Adrenal gland (tissue), 19 donors: ENCODE measurements at regions of chr5 and their contacts with region 1.

Region 1: DNA sequence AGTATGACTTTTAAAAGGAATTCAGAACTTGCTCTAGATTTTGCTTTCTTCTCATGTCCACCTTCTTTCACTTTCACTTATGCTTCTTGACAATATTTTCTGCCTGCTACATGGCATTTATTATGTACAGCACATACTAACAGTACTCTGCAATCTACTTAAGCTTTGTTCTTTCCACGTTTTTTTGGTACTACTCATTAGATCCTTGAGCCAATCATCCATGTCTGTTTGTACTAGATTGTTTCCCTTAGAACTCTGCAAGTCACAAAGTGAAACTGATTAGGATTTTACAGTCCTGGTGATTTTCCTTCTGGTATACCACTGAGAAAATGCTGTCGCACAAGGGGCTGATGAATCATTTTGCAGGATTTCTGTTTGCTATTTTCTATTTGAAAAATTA is 78.3 kb downstream of the PARP8 start:
- DNase-seq: no peak
- H3K4me3 ChIP-seq: peak overlapping the region in 2 of 4 donors; percentile 8 to 55
- H3K27ac ChIP-seq: peak overlapping the region in 3 of 5 donors; percentile 41 to 64 (median 58)
- H3K4me1 ChIP-seq: peaks cover 0 to 30% of the 10 kb centered on the region in 2 donors
- H3K27me3 ChIP-seq: no peaks in the 10 kb centered on the region
- CTCF ChIP-seq: no peak
- POLR2A ChIP-seq: no peak

Region 2: GRCh38 chr5:50667653-50668595 is 76.9 kb before region 1 on chr5:
- intact Hi-C with region 1: loop called in 1 of 2 experiments (anchors 10 kb)
- DNase-seq: peak; percentile 55 to 72 (median 66)
- H3K4me3 ChIP-seq: peak overlapping the region; percentile 73 to 100 (median 88)
- H3K27ac ChIP-seq: peak overlapping the region; percentile 58 to 93 (median 87)
- H3K4me1 ChIP-seq: peaks cover 0 to 32% of the 10 kb centered on the region in 2 donors
- H3K27me3 ChIP-seq: no peaks in the 10 kb centered on the region
- CTCF ChIP-seq: no peak
- POLR2A ChIP-seq: peak in 1 of 2 donors; percentile 16

Region 3: GRCh38 chr5:50697421-50698138 is 47.2 kb before region 1 on chr5:
- intact Hi-C with region 1: no loop called
- DNase-seq: no peak
- H3K4me3 ChIP-seq: no peak overlapping the region
- H3K27ac ChIP-seq: no peak overlapping the region
- H3K4me1 ChIP-seq: peaks cover 0 to 13% of the 10 kb centered on the region in 2 donors
- H3K27me3 ChIP-seq: no peaks in the 10 kb centered on the region
- CTCF ChIP-seq: no peak
- POLR2A ChIP-seq: no peak

Region 4: DNA sequence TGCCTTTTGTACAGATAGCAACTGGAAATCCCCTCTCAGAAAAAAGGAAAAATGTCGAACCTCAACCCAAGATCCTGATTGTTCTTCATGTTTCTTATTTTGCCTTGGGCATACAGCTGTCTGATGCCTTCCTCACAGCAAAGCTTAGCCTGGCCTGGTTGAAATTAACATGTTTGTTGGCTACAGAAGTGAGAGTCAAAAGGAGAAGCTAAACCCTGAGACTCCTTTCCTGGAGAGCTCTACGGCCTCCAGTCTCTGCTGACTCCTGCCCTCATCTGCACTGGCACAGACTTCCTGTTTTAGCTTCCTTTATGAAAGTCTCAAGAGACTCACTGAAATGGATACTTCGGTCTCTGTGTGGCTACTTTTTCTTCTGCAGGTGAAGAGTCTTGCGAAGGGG is 108.4 kb after region 1 on chr5:
- intact Hi-C with region 1: no loop called
- DNase-seq: peak in 5 of 7 donors; percentile 18 to 57 (median 23)
- H3K4me3 ChIP-seq: no peak overlapping the region
- H3K27ac ChIP-seq: no peak overlapping the region
- H3K4me1 ChIP-seq: no peaks in the 10 kb centered on the region
- H3K27me3 ChIP-seq: no peaks in the 10 kb centered on the region
- CTCF ChIP-seq: no peak
- POLR2A ChIP-seq: no peak